Cardiac septum (tissue), 1 donor: ENCODE measurements at regions of chr2 and their contacts with region 1.

Region 1: GRCh38 chr2:74529357-74530238 is at the starts of genes AUP1 and HTRA2:
- DNase-seq: peak; percentile 99
- total RNA-seq, gene AUP1: 50.0 TPM
- total RNA-seq, gene HTRA2: 25.0 TPM

Region 2: DNA sequence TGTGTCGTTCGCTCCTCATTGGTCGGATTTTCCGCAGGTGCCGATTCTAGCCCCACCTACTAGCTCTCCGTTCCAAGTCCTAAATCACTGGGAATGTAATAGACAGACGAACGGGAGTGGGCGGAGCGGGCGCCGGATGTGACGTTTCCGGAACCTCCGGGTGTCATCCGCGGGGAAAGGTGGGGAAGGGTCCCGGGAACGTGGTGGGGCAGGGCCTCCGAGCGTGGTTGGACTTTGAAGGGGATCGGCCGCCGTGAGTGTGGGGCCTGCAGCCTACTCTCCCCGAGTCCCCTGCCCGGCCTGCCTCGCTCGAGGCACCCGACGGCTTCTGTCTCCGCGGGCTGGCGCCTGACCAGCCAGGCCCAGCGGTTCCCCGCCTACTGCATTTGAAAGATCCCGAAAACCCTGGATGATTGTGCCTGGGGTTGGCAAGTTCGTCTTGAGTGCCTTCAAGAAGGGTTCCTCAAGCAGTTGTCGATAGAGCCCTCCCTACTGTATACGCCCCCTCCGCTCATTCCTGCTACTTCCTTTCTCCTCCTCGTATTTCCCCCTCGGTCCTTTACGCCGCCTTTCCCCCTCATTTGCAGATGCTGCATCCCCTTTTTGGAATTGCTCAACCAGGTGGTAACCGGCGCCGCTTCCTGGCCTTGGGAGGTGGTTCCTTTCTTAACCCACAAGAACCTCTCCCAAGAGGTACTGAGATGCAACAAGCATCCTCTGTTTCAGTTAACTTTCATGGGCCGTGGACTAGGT is 700.6 kb before region 1 on chr2 and contains the start of gene STAMBP:
- intact Hi-C with region 1: loop called (anchors 10 kb)
- DNase-seq: peak; percentile 98
- total RNA-seq, gene STAMBP: 37.4 TPM

Region 3: DNA sequence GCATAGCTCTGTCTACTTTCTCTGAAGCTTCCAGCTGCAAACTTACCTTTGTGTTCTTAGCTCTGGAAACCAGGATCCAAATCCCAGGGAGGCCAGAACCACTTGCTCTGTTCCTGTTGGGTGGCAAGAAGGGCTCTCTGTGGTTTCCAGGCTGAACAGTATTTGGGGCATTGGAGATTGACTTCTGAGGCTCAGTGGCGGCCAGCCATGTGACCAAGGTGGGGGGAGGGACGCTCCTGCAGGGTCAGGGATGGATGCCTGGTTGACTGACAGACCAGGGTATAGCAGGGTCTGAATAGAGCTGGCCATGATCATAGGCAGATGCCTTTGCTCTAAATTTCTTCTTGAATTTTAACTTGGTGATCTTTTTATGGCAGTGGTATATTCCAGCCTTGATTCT is 201.5 kb before region 1 on chr2:
- intact Hi-C with region 1: no loop called
- DNase-seq: no peak

Region 4: GRCh38 chr2:74482801-74483674 is 46.6 kb before region 1 on chr2 and contains the starts of genes CCDC142 and TTC31:
- intact Hi-C with region 1: loop called (anchors 1 kb)
- DNase-seq: peak; percentile 97
- total RNA-seq, gene CCDC142: 8.0 TPM
- total RNA-seq, gene TTC31: 11.2 TPM

Region 5: GRCh38 chr2:74540291-74540690 is 10.7 kb after region 1 on chr2:
- intact Hi-C with region 1: no loop called
- DNase-seq: no peak

Region 6: GRCh38 chr2:74553892-74554645 is 24.5 kb after region 1 on chr2 and contains the start of gene LOXL3:
- intact Hi-C with region 1: loop called (anchors 1 kb)
- DNase-seq: peak; percentile 85
- total RNA-seq, gene LOXL3: 2.8 TPM

Region 7: DNA sequence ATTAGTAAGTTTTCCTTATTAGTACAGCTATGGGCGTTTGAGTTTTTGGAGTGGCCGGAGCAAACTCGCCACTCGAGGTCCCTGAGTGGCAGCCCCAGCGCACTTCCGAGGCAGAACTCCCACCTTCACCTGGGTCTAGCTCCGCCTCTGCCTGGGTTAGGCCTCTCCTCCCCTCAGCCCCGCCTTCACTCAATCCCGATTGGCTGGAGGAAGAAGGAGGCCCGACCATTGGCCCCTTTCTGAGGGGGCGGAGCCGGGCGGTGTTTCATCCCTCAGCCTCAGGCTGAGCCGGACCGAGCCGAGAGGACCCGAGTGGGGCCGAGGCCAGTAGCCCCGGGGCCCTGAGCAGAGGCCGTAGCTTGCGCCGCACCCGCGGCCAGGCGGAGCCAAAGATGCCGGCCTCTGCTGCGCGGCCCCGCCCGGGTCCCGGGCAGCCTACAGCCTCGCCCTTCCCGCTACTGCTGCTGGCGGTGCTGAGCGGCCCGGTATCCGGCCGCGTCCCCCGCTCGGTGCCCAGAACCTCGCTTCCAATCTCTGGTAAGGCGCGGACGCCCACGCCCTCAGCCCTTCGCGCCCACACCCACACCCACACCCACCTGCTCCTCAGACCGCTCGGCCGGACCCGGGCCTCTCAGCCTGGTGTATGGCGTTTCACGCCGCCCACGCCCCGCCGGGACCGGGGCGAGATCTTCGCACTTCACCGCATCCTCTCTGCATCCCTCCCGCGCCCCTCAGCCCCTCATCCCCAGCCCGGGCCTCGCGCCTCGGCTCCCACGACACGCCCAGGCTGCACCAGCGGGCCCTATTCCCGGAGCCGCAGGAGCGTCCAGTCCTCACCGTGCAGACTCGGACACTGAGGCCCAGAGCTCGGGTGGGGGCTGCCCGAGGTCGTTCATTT is 124.6 kb after region 1 on chr2 and contains the start of gene SEMA4F:
- intact Hi-C with region 1: loop called (anchors 10 kb)
- DNase-seq: peak; percentile 97
- total RNA-seq, gene SEMA4F: 3.0 TPM

Region 8: GRCh38 chr2:74708883-74709282 is 179.3 kb after region 1 on chr2:
- intact Hi-C with region 1: no loop called
- DNase-seq: no peak